ENCODE measurements at regions of chr5 and their contacts with region 1.

Region 1: DNA sequence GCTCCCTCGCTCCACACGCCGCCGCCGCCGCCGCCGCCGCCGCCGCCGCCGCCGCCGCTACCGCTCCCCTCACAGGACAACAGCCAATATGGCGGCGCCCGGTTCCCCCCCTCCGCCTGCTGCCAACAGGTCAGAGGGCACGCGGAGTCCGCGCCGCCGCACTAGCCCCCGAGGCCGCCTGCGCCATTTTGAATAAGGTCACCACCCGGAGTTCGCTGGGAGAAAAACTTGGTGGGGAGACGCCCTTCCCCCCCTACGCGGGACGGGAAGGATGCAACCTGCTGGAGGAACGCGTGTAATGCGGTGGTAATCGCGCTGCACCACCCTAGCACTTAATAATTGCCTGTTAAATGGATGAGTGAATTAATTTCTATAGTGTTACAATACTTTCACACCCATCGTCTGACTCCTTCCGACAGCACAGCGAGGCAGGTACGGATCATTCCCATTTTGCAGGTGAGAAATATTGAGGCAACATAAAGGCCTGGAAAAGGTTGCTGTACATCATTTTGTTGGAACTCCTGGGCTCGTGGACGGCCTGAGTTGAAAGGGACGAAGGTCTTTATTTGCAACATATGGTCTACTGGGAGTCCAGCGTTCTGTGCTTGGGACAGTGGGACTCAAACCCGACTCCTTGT is at the start of gene FAM193B:
- DNase-seq: peak; percentile 98
- H3K4me3 Mint-ChIP-seq: peak within 1 kb of the TSS; percentile 85
- H3K27ac Mint-ChIP-seq: peak within 1 kb of the TSS; percentile 51
- H3K4me1 Mint-ChIP-seq: peaks cover 35% of the 10 kb centered on the region
- H3K27me3 Mint-ChIP-seq: no peaks in the 10 kb centered on the region
- total RNA-seq, gene FAM193B: 70.7 to 75.4 TPM

Region 2: GRCh38 chr5:177288191-177288590 is 266.4 kb before region 1 on chr5:
- CTCF ChIA-PET with region 1: no interaction called
- POLR2A ChIA-PET with region 1: no interaction called
- intact Hi-C with region 1: no loop called
- DNase-seq: no peak
- H3K4me3 Mint-ChIP-seq: no peak overlapping the region
- H3K27ac Mint-ChIP-seq: no peak overlapping the region
- H3K4me1 Mint-ChIP-seq: no peaks in the 10 kb centered on the region
- H3K27me3 Mint-ChIP-seq: no peaks in the 10 kb centered on the region

Region 3: DNA sequence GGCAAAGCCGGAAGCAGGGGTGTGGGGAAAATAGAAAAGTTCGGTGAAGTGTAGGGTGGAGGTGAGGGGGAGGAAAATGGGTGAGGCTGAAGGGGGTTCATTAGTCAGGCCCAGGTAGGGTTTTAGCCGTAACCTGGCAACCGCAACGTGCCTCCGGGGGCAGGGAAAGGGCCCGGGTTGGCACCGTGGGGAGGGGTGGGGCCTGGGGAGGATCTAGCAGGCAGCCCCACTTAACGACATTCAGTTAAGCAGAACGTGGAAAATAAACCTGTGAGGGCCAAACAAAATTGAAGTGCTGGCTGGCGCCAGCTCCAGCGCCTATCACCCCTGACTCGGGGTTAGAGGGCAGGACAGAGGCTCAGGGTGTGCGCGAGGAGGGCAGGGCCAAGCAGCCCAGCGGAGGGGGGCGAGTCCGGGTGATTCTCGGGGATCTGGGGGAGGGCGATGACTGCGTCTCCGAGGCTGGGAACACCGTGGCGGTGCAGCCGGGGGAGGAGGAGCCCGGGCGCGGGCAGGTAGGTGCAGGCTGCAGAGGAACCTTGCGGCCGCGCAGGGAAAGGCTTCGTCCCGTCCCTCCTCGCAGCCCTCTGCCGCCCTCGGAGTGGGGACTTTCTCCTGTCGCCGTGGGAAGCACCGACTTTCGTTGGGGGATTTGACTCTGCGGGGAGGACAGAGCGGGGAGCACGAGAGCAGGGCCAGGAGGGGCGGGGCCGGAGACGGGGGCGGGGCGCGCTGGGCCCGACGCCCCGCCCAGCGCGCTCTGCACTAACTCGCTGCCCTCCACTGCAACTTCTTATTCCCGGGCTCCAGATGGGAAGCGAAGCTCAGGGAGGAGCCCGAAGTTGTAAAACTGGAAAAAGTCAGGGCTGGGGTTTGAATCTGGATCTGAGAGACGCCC is 191.7 kb before region 1 on chr5:
- CTCF ChIA-PET with region 1: no interaction called
- POLR2A ChIA-PET with region 1: no interaction called
- intact Hi-C with region 1: no loop called
- DNase-seq: peak; percentile 82
- H3K4me3 Mint-ChIP-seq: peak overlapping the region; percentile 69
- H3K27ac Mint-ChIP-seq: peak overlapping the region; percentile 51
- H3K4me1 Mint-ChIP-seq: peaks cover 73% of the 10 kb centered on the region
- H3K27me3 Mint-ChIP-seq: no peaks in the 10 kb centered on the region

Region 4: DNA sequence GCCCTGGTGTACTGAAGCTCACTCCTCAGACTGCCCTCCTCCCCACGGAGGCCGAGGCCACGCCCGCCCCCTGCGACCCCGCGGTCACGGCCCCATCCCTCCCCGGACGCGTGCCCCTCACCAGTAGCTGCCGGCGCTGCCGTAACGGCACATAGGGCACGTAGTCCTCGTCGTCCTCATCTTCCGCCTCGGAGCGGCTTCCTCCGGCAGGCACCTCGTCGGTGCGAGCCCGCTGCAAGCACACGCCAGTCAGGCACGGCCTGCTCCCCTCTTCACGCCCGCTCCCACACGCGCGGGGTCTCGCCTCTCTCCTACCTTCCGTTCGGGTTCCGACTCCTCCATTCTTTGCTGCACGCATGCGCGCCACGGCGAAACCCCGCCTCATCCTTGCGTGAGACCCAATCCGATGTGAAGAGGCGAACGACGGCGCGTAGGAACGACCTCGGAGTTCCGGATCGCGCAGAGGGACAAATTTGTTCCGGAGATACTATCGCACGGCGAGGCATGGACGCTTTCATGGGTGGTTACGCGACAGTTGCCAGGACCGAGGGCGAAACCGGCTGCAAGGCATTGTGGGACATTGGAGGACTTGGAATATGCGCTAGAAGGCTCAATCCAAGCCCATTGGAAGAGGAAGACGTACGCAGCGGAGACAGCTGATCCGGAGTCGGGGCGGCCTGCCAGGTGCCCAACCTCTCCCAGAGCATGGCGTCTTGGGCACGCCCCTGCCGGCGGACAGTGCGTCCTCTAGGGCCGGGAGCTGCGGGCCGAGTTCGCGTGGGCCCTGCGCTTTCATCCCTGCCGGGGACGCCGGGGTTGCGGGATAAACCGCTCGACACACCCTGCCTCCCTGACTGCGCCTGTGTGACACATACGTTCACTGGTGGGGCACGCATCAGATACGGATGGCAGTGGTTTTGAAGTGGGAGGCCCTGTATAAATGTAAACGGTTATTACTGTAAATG is 37.7 kb before region 1 on chr5 and contains the start of gene DDX41:
- CTCF ChIA-PET with region 1: no interaction called
- POLR2A ChIA-PET with region 1: no interaction called
- intact Hi-C with region 1: loop called (anchors 5 kb)
- DNase-seq: peak; percentile 98
- H3K4me3 Mint-ChIP-seq: peak within 1 kb of the TSS; percentile 88
- H3K27ac Mint-ChIP-seq: peak within 1 kb of the TSS; percentile 83
- H3K4me1 Mint-ChIP-seq: peaks cover 46% of the 10 kb centered on the region
- H3K27me3 Mint-ChIP-seq: no peaks in the 10 kb centered on the region
- total RNA-seq, gene DDX41: 143 to 145 TPM

Measured in activated CD4-positive, alpha-beta memory T cell treated with anti-CD3 and anti-CD28 coated beads for 36 hours (primary cell).